Activated CD4-positive, alpha-beta T cell treated with anti-CD3 and anti-CD28 coated beads for 36 hours (primary cell): ENCODE measurements at regions of chr1 and their contacts with region 1.

Region 1: DNA sequence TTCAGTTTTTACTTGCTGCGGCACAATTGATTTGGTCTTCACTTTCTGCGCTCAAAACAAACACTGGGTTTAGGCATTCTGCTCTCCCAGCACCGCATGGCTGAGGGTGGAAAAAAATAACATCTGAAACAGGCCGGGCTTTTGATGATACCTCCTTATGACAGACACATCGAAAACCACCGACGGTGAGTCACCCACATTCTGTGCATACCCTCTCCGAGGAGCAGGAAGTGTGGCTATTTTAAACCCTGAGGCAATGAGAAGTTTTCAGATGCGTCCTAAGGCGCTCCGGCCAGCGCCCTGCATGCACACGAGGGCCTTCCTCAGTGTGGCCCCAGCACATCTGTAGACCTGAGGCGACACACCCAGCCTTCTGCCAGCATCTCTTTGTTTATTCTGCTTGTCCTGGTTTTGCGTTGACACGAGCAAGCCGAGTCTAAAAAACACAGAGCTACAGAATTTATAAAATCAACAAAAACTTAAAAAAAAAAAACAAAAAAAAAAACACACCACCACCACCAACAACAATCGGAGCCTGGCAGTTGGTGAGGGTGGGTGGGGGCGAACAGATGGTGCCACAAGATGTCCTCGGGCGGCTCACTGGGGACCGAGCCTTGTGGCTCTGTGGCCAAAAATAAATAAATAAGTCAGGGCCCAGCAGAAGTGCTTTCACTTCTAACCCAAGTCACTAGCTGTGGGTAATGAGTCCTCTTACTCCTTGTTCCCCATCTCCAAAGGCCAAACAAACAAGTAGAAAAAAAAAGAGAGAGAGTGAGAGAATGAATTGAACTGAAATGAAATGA is 162.6 kb upstream of the IRF2BP2 start:
- DNase-seq: peak; percentile 95
- ATAC-seq: peak; percentile 78
- H3K4me3 Mint-ChIP-seq: peak overlapping the region; percentile 45
- H3K27ac Mint-ChIP-seq: peak overlapping the region; percentile 95
- H3K4me1 Mint-ChIP-seq: peaks cover 59% of the 10 kb centered on the region
- H3K27me3 Mint-ChIP-seq: peaks cover 1% of the 10 kb centered on the region

Region 2: GRCh38 chr1:233988963-233989696 is 783.4 kb before region 1 on chr1:
- CTCF ChIA-PET with region 1: no interaction called
- POLR2A ChIA-PET with region 1: no interaction called
- intact Hi-C with region 1: no loop called
- DNase-seq: no peak
- ATAC-seq: no peak
- H3K4me3 Mint-ChIP-seq: no peak overlapping the region
- H3K27ac Mint-ChIP-seq: no peak overlapping the region
- H3K4me1 Mint-ChIP-seq: peaks cover 5% of the 10 kb centered on the region
- H3K27me3 Mint-ChIP-seq: peaks cover 14% of the 10 kb centered on the region

Region 3: DNA sequence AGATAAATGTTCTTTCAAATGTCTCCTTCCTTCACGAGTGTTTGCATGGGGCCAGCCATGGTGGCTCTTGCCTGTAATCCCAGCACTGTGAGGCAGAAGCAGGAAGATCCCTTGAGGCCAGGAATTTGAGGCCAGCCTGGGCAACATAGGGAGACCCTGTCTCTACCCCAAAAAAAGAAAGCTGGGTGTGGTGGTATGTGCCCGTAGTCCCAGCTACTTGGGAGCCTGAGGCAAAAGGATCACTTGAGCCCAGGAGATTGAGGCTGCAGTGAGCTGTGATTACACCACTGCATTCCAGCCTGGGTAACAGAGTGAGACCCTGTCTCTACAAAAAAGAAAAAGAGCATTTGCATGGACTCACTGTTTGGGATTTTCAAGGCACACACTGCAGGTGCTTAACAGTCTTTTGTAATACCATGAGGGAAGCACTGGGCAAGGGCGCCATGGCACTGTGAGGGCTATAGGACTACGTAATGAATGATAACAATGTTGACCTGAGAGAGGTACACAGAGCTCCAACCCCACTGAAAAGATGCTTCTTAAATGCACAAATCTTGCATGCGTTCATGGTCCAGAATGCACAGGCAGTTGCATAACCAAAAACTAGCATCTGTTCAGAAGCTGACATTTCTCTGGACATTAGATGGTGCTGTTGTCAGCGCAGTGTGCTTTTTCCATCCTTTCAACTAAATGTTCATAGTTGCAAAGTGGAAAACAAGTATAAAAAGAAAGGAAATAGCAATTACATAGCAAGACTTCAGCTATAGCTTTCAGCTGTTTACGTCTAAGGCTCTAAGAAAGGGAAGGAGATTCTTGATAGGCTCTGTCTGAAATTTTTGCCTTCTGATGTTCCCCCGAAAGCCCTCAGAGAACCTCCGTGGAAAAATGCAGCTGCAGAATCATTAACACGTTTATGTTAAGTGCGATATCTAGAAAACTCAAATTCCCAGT is 285.8 kb before region 1 on chr1:
- CTCF ChIA-PET with region 1: no interaction called
- POLR2A ChIA-PET with region 1: no interaction called
- intact Hi-C with region 1: loop called in 1 of 2 experiments (anchors 5 kb)
- DNase-seq: peak; percentile 61
- ATAC-seq: peak; percentile 16
- H3K4me3 Mint-ChIP-seq: no peak overlapping the region
- H3K27ac Mint-ChIP-seq: peak overlapping the region; percentile 98
- H3K4me1 Mint-ChIP-seq: peaks cover 43% of the 10 kb centered on the region
- H3K27me3 Mint-ChIP-seq: peaks cover 16% of the 10 kb centered on the region

Region 4: GRCh38 chr1:234722904-234723720 is 49.4 kb before region 1 on chr1:
- CTCF ChIA-PET with region 1: interaction called, 4 read pairs
- POLR2A ChIA-PET with region 1: interaction called, 4 read pairs
- intact Hi-C with region 1: loop called in 1 of 2 experiments (anchors 1 kb)
- DNase-seq: peak; percentile 92
- ATAC-seq: peak; percentile 68
- H3K4me3 Mint-ChIP-seq: peak overlapping the region; percentile 64
- H3K27ac Mint-ChIP-seq: peak overlapping the region; percentile 97
- H3K4me1 Mint-ChIP-seq: peaks cover 66% of the 10 kb centered on the region
- H3K27me3 Mint-ChIP-seq: no peaks in the 10 kb centered on the region

Region 5: GRCh38 chr1:234730770-234731568 is 41.6 kb before region 1 on chr1:
- CTCF ChIA-PET with region 1: interaction called, 4 read pairs
- POLR2A ChIA-PET with region 1: no interaction called
- intact Hi-C with region 1: loop called (anchors 1 kb)
- DNase-seq: peak; percentile 77
- ATAC-seq: peak; percentile 87
- H3K4me3 Mint-ChIP-seq: peak overlapping the region; percentile 32
- H3K27ac Mint-ChIP-seq: peak overlapping the region; percentile 92
- H3K4me1 Mint-ChIP-seq: peaks cover 71% of the 10 kb centered on the region
- H3K27me3 Mint-ChIP-seq: no peaks in the 10 kb centered on the region

Region 6: DNA sequence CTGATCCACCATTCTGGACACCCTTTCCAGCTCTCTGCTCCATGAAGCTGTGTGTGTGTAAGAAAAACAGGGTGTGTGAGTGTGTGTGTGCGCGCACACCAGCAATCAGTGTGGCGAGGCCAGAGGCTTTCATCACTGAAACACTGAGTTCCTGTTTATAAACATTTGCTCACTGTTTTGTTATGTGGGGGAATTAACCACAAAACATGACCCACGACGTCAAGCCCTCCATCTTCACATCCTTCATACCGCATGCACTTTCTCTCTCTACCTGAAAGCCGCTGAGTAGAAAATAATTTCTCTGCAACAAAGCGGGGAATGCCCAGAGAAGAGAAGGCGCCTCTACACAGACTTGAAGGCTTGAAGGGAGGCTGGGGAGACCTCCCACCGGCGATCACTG is 13.7 kb before region 1 on chr1:
- CTCF ChIA-PET with region 1: interaction called, 5 read pairs
- POLR2A ChIA-PET with region 1: no interaction called
- intact Hi-C with region 1: loop called in 1 of 2 experiments (anchors 1 kb)
- DNase-seq: peak; percentile 58
- ATAC-seq: peak; percentile 78
- H3K4me3 Mint-ChIP-seq: no peak overlapping the region
- H3K27ac Mint-ChIP-seq: peak overlapping the region; percentile 77
- H3K4me1 Mint-ChIP-seq: peaks cover 30% of the 10 kb centered on the region
- H3K27me3 Mint-ChIP-seq: peaks cover 4% of the 10 kb centered on the region

Region 7: GRCh38 chr1:234933475-234933874 is 160.9 kb after region 1 on chr1:
- CTCF ChIA-PET with region 1: no interaction called
- POLR2A ChIA-PET with region 1: no interaction called
- intact Hi-C with region 1: no loop called
- DNase-seq: peak; percentile 59
- ATAC-seq: peak; percentile 83
- H3K4me3 Mint-ChIP-seq: no peak overlapping the region
- H3K27ac Mint-ChIP-seq: peak overlapping the region; percentile 82
- H3K4me1 Mint-ChIP-seq: peaks cover 63% of the 10 kb centered on the region
- H3K27me3 Mint-ChIP-seq: no peaks in the 10 kb centered on the region

Region 8: GRCh38 chr1:235075188-235075926 is 302.8 kb after region 1 on chr1:
- CTCF ChIA-PET with region 1: interaction called, 3 read pairs
- POLR2A ChIA-PET with region 1: no interaction called
- intact Hi-C with region 1: loop called (anchors 1 to 2 kb)
- DNase-seq: peak; percentile 86
- ATAC-seq: peak; percentile 64
- H3K4me3 Mint-ChIP-seq: peak overlapping the region; percentile 41
- H3K27ac Mint-ChIP-seq: peak overlapping the region; percentile 98
- H3K4me1 Mint-ChIP-seq: peaks cover 28% of the 10 kb centered on the region
- H3K27me3 Mint-ChIP-seq: no peaks in the 10 kb centered on the region